Activated CD4-positive, alpha-beta memory T cell treated with anti-CD3 and anti-CD28 coated beads for 36 hours (primary cell): ENCODE measurements at regions of chr9 and their contacts with region 1.

Region 1: DNA sequence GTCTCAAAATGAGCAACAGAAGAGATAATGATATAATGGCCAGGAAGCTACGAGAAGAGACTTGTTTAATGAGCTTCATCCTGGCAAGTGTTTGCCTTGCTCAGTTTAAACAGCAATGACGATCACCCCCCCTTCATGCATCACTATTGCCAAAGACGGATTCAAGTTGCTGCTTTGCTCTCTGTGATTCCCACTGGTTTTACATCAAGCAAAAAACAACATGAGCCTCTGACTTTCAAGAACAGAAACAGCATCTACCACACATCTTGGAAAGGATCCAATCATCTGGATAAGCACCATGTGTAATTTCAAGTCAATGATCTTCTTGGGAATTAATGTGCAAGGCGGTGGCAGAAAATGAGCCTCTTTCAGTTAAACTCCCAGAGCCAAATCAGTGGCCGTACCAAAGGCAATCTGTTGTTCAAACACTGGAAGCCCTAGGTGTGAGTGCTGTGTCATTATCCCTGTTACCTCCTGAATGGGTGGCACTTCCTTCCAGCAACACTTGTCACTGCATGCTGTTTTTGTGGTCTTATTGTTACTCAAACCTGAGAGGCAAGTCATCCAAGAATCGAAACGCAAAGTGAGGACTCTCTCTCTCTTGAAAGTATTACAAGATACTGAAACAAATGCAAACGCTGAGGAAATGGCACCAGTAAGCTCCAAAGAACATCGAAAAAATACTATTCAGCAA is 72.8 kb downstream of the MED27 start:
- DNase-seq: peak; percentile 70
- H3K4me3 Mint-ChIP-seq: no peak overlapping the region
- H3K27ac Mint-ChIP-seq: peak overlapping the region; percentile 2
- H3K4me1 Mint-ChIP-seq: peaks cover 58% of the 10 kb centered on the region
- H3K27me3 Mint-ChIP-seq: no peaks in the 10 kb centered on the region

Region 2: GRCh38 chr9:132125944-132126720 is 119.3 kb after region 1 on chr9:
- CTCF ChIA-PET with region 1: interaction called, 4 read pairs
- POLR2A ChIA-PET with region 1: interaction called, 3 read pairs
- intact Hi-C with region 1: loop called (anchors 5 kb)
- DNase-seq: peak; percentile 56
- H3K4me3 Mint-ChIP-seq: peak overlapping the region; percentile 42
- H3K27ac Mint-ChIP-seq: no peak overlapping the region
- H3K4me1 Mint-ChIP-seq: peaks cover 21% of the 10 kb centered on the region
- H3K27me3 Mint-ChIP-seq: peaks cover 68% of the 10 kb centered on the region

Region 3: DNA sequence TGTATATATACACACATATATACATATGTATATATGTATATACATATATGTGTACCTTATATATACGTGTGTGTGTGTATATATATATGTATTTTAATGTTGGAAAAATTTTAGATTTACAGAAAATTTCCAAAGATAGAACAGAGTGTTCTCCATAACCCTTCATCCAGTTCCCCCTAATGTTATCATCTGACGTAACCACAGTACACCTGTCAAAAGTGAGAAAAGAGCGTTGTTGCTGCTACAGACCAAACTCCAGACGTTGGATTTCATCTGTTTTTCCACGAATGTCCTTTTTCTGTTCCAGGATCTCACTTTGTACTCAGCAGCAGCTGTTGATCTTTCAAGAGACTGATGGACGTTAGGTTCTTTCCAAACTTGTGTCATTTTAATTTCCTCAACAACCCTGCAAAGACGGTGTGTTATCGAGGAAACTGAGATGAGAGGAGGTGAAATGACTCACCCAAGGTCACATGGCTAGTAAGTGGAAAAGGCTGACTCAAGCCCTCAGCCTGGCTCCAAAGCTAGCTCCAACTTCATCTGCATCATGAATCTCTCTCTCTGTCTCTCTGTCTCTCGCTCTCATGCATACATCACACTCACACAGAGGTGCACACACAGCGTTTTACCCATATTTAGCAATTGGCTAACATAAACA is 138.0 kb after region 1 on chr9:
- CTCF ChIA-PET with region 1: no interaction called
- POLR2A ChIA-PET with region 1: no interaction called
- intact Hi-C with region 1: loop called (anchors 5 kb)
- DNase-seq: peak; percentile 65
- H3K4me3 Mint-ChIP-seq: no peak overlapping the region
- H3K27ac Mint-ChIP-seq: peak overlapping the region; percentile 73
- H3K4me1 Mint-ChIP-seq: peaks cover 18% of the 10 kb centered on the region
- H3K27me3 Mint-ChIP-seq: peaks cover 67% of the 10 kb centered on the region